CD4-positive, alpha-beta T cell (primary cell): ENCODE measurements at regions of chr11 and their contacts with region 1.

Region 1: GRCh38 chr11:65497141-65498041 is 1.5 kb upstream of the MALAT1 start:
- DNase-seq: peak; percentile 95 to 99 (median 98)
- ATAC-seq: peak; percentile 78
- H3K4me3 ChIP-seq: peak overlapping the region; percentile 73
- H3K4me3 Mint-ChIP-seq: no peak overlapping the region
- H3K27ac ChIP-seq: peak overlapping the region; percentile 96 to 99
- H3K27ac Mint-ChIP-seq: no peak overlapping the region
- H3K4me1 ChIP-seq: peaks cover 33% of the 10 kb centered on the region
- H3K4me1 Mint-ChIP-seq: peaks cover 28% of the 10 kb centered on the region
- H3K27me3 ChIP-seq: no peaks in the 10 kb centered on the region
- H3K27me3 Mint-ChIP-seq: no peaks in the 10 kb centered on the region
- CTCF ChIP-seq: no peak

Region 2: DNA sequence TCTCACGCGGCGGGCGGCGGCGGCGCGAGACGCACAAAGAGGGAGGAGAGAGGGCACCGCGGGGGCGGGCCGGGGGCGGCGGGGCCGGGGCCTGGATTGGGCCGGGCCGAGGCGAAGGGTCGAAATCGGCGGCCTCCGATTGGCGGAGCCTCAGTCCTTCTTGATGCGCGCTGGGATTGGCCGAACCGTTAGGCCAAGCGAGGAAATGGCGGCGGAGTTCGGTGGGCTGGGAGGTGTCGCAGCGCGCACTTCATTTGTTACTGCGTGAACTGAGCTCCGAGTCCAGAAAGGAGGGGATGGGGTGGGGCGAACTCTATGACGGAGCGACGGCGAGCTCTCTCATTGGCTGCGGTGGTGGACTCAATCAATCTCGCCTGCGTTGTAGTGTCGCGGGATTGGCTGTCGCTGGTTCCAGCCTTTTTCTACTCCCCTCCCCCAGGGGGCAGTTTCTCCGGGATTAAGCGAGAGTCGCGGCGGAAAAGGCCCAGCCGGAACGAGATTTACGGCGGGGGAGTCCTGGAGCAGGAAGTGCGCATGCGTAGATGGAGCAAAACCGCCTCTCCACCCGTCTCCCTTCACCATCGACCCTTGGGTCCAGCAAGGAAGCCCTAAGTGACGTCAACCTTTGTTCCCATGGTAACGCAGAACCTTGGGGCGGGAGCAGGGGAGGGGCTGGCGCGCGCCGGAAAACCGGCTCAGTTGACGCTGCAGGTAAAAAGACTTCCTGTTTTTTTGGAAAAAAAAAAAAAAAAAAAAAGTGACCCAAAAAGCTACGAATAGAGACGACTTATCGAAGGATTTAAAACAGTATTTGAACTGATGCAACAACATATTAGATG is 718.7 kb before region 1 on chr11 and contains the start of gene SF1:
- CTCF ChIA-PET with region 1: no interaction called
- POLR2A ChIA-PET with region 1: interaction called, 28 read pairs
- intact Hi-C with region 1: no loop called
- DNase-seq: peak; percentile 96 to 100 (median 98)
- ATAC-seq: peak; percentile 81
- H3K4me3 ChIP-seq: peak within 1 kb of the TSS; percentile 74
- H3K4me3 Mint-ChIP-seq: peak within 1 kb of the TSS; percentile 95
- H3K27ac ChIP-seq: peak within 1 kb of the TSS; percentile 94 to 98
- H3K27ac Mint-ChIP-seq: peak within 1 kb of the TSS; percentile 99
- H3K4me1 ChIP-seq: peaks cover 52% of the 10 kb centered on the region
- H3K4me1 Mint-ChIP-seq: peaks cover 70% of the 10 kb centered on the region
- H3K27me3 ChIP-seq: no peaks in the 10 kb centered on the region
- H3K27me3 Mint-ChIP-seq: no peaks in the 10 kb centered on the region
- CTCF ChIP-seq: peak; percentile 14
- total RNA-seq, gene SF1: 1,632 to 1,657 TPM

Region 3: GRCh38 chr11:65288706-65289536 is 208.5 kb before region 1 on chr11:
- CTCF ChIA-PET with region 1: no interaction called
- POLR2A ChIA-PET with region 1: no interaction called
- intact Hi-C with region 1: no loop called
- DNase-seq: no peak
- ATAC-seq: no peak
- H3K4me3 ChIP-seq: no peak overlapping the region
- H3K4me3 Mint-ChIP-seq: no peak overlapping the region
- H3K27ac ChIP-seq: no peak overlapping the region
- H3K27ac Mint-ChIP-seq: no peak overlapping the region
- H3K4me1 ChIP-seq: no peaks in the 10 kb centered on the region
- H3K4me1 Mint-ChIP-seq: no peaks in the 10 kb centered on the region
- H3K27me3 ChIP-seq: no peaks in the 10 kb centered on the region
- H3K27me3 Mint-ChIP-seq: no peaks in the 10 kb centered on the region
- CTCF ChIP-seq: no peak

Region 4: GRCh38 chr11:65314501-65315203 is 182.7 kb before region 1 on chr11 and contains the start of gene CDC42EP2:
- CTCF ChIA-PET with region 1: no interaction called
- POLR2A ChIA-PET with region 1: interaction called, 16 read pairs
- intact Hi-C with region 1: no loop called
- DNase-seq: peak; percentile 35 to 86 (median 72)
- ATAC-seq: peak; percentile 89
- H3K4me3 ChIP-seq: peak within 1 kb of the TSS; percentile 90
- H3K4me3 Mint-ChIP-seq: peak within 1 kb of the TSS; percentile 86
- H3K27ac ChIP-seq: no peak within 1 kb of the TSS
- H3K27ac Mint-ChIP-seq: no peak within 1 kb of the TSS
- H3K4me1 ChIP-seq: peaks cover 21% of the 10 kb centered on the region
- H3K4me1 Mint-ChIP-seq: peaks cover 12% of the 10 kb centered on the region
- H3K27me3 ChIP-seq: peaks cover 0 to 2% of the 10 kb centered on the region in 2 experiments
- H3K27me3 Mint-ChIP-seq: no peaks in the 10 kb centered on the region
- CTCF ChIP-seq: no peak
- total RNA-seq, gene CDC42EP2: 0.96 TPM in 1 of 2 experiments, not detected in the other

Region 5: DNA sequence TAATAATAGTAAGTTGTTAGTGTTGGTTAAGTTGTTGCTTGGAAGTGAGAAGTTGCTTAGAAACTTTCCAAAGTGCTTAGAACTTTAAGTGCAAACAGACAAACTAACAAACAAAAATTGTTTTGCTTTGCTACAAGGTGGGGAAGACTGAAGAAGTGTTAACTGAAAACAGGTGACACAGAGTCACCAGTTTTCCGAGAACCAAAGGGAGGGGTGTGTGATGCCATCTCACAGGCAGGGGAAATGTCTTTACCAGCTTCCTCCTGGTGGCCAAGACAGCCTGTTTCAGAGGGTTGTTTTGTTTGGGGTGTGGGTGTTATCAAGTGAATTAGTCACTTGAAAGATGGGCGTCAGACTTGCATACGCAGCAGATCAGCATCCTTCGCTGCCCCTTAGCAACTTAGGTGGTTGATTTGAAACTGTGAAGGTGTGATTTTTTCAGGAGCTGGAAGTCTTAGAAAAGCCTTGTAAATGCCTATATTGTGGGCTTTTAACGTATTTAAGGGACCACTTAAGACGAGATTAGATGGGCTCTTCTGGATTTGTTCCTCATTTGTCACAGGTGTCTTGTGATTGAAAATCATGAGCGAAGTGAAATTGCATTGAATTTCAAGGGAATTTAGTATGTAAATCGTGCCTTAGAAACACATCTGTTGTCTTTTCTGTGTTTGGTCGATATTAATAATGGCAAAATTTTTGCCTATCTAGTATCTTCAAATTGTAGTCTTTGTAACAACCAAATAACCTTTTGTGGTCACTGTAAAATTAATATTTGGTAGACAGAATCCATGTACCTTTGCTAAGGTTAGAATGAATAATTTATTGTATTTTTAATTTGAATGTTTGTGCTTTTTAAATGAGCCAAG is 72.1 kb before region 1 on chr11:
- CTCF ChIA-PET with region 1: interaction called, 8 read pairs
- POLR2A ChIA-PET with region 1: interaction called, 3,042 read pairs
- intact Hi-C with region 1: loop called (anchors 1 to 2 kb)
- DNase-seq: peak; percentile 69 to 97 (median 80)
- ATAC-seq: peak; percentile 56
- H3K4me3 ChIP-seq: peak overlapping the region; percentile 86
- H3K4me3 Mint-ChIP-seq: peak overlapping the region; percentile 92
- H3K27ac ChIP-seq: peak overlapping the region; percentile 99
- H3K27ac Mint-ChIP-seq: peak overlapping the region; percentile 96
- H3K4me1 ChIP-seq: peaks cover 58% of the 10 kb centered on the region
- H3K4me1 Mint-ChIP-seq: peaks cover 70% of the 10 kb centered on the region
- H3K27me3 ChIP-seq: no peaks in the 10 kb centered on the region
- H3K27me3 Mint-ChIP-seq: no peaks in the 10 kb centered on the region
- CTCF ChIP-seq: peak; percentile 31

Region 6: DNA sequence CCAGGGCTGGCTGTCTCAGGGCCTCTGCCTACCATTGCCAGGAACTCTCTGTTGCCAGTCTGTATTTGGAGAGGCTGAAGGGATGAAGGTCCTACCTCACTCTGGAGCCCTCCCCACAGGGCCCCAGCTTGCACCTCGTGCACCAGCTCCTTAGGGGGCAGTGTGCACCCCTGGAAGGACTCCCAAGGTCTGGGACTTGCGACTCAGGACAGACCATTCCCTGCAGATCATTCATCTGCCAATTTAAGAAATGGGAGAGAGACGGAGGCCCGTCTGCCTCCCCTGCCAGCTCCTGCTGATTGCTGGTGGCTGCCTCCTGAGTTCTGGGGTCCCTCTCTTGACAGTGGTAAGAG is 26.0 kb before region 1 on chr11:
- CTCF ChIA-PET with region 1: interaction called, 24 read pairs
- POLR2A ChIA-PET with region 1: interaction called, 968 read pairs
- intact Hi-C with region 1: loop called in 1 of 2 experiments (anchors 1 kb)
- DNase-seq: peak in 5 of 14 experiments; percentile 15 to 64 (median 32)
- ATAC-seq: no peak
- H3K4me3 ChIP-seq: peak overlapping the region; percentile 3
- H3K4me3 Mint-ChIP-seq: no peak overlapping the region
- H3K27ac ChIP-seq: peak overlapping the region; percentile 72 to 76
- H3K27ac Mint-ChIP-seq: peak overlapping the region; percentile 92
- H3K4me1 ChIP-seq: peaks cover 26% of the 10 kb centered on the region
- H3K4me1 Mint-ChIP-seq: peaks cover 16% of the 10 kb centered on the region
- H3K27me3 ChIP-seq: no peaks in the 10 kb centered on the region
- H3K27me3 Mint-ChIP-seq: no peaks in the 10 kb centered on the region
- CTCF ChIP-seq: no peak

Region 7: GRCh38 chr11:65558002-65558931 is 60.9 kb after region 1 on chr11 and contains the start of gene LTBP3:
- CTCF ChIA-PET with region 1: no interaction called
- POLR2A ChIA-PET with region 1: interaction called, 14 read pairs
- intact Hi-C with region 1: no loop called
- DNase-seq: peak in 7 of 14 experiments; percentile 36 to 73 (median 65)
- ATAC-seq: peak; percentile 39
- H3K4me3 ChIP-seq: peak within 1 kb of the TSS; percentile 63
- H3K4me3 Mint-ChIP-seq: peak within 1 kb of the TSS; percentile 94
- H3K27ac ChIP-seq: peak within 1 kb of the TSS; percentile 80
- H3K27ac Mint-ChIP-seq: peak within 1 kb of the TSS; percentile 87
- H3K4me1 ChIP-seq: peaks cover 80% of the 10 kb centered on the region
- H3K4me1 Mint-ChIP-seq: peaks cover 59% of the 10 kb centered on the region
- H3K27me3 ChIP-seq: no peaks in the 10 kb centered on the region
- H3K27me3 Mint-ChIP-seq: no peaks in the 10 kb centered on the region
- CTCF ChIP-seq: no peak
- total RNA-seq, gene LTBP3: 236 to 238 TPM

Region 8: GRCh38 chr11:65711785-65712632 is 214.6 kb after region 1 on chr11 and contains the start of gene KAT5:
- CTCF ChIA-PET with region 1: no interaction called
- POLR2A ChIA-PET with region 1: interaction called, 13 read pairs
- intact Hi-C with region 1: no loop called
- DNase-seq: peak; percentile 95 to 99 (median 96)
- ATAC-seq: peak; percentile 79
- H3K4me3 ChIP-seq: peak within 1 kb of the TSS; percentile 82
- H3K4me3 Mint-ChIP-seq: peak within 1 kb of the TSS; percentile 98
- H3K27ac ChIP-seq: peak within 1 kb of the TSS; percentile 99
- H3K27ac Mint-ChIP-seq: peak within 1 kb of the TSS; percentile 99
- H3K4me1 ChIP-seq: peaks cover 30% of the 10 kb centered on the region
- H3K4me1 Mint-ChIP-seq: peaks cover 23% of the 10 kb centered on the region
- H3K27me3 ChIP-seq: no peaks in the 10 kb centered on the region
- H3K27me3 Mint-ChIP-seq: no peaks in the 10 kb centered on the region
- CTCF ChIP-seq: peak; percentile 98
- total RNA-seq, gene KAT5: 90.9 to 99.6 TPM

Region 9: GRCh38 chr11:65851812-65852507 is 354.6 kb after region 1 on chr11:
- CTCF ChIA-PET with region 1: no interaction called
- POLR2A ChIA-PET with region 1: no interaction called
- intact Hi-C with region 1: no loop called
- DNase-seq: peak in 1 of 14 experiments; percentile 26
- ATAC-seq: no peak
- H3K4me3 ChIP-seq: no peak overlapping the region
- H3K4me3 Mint-ChIP-seq: no peak overlapping the region
- H3K27ac ChIP-seq: no peak overlapping the region
- H3K27ac Mint-ChIP-seq: no peak overlapping the region
- H3K4me1 ChIP-seq: peaks cover 40% of the 10 kb centered on the region
- H3K4me1 Mint-ChIP-seq: peaks cover 26% of the 10 kb centered on the region
- H3K27me3 ChIP-seq: no peaks in the 10 kb centered on the region
- H3K27me3 Mint-ChIP-seq: no peaks in the 10 kb centered on the region
- CTCF ChIP-seq: no peak

Region 10: DNA sequence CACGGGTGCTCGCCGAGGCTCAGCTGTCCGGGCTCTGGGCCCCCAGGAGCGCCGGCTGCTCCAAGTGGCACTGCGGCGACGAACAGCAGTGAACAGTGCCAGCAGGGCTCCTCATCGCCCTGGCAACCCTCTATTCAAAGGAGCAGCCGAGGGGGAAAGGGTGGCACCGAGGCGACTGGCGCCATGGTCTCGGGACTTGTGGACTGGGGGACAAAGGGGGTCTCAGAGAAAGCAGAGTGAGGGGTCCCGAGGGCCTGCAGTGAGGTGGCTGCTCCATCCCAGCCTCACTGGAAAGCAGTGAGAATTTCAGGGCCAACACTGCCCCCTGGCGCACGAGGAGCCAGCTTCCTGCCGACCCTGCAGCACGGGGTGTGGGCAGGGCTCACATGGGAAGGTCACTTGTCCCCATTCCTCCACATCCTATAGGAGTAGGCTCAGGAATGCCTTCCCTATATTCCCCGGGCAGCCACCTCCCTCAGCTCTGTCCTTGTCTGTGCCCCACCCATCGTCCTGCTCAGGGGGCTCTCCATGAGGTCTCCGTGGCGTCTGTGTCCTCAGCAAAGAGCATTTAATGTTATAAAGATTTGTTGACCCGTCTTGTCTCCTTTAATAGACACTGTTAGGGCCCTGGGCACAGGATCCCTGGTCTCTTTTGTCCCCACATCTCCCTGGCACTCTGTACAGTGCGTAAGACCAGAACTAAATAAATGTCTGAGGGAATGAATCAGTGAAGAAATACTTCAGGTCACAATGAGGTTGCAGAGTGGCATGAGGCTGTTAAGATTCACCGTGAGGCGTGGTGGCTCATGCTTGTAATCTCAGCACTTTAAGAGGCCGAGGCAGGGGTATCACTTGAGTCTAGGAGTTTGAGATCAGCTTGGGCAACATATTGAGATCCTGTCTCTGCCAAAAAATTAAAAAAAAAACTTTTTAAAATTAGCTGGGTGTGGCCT is 1385.9 kb after region 1 on chr11:
- CTCF ChIA-PET with region 1: no interaction called
- POLR2A ChIA-PET with region 1: no interaction called
- intact Hi-C with region 1: no loop called
- DNase-seq: peak in 13 of 14 experiments; percentile 38 to 71 (median 54)
- ATAC-seq: peak; percentile 54
- H3K4me3 ChIP-seq: no peak overlapping the region
- H3K4me3 Mint-ChIP-seq: no peak overlapping the region
- H3K27ac ChIP-seq: no peak overlapping the region
- H3K27ac Mint-ChIP-seq: no peak overlapping the region
- H3K4me1 ChIP-seq: peaks cover 13% of the 10 kb centered on the region
- H3K4me1 Mint-ChIP-seq: peaks cover 14% of the 10 kb centered on the region
- H3K27me3 ChIP-seq: no peaks in the 10 kb centered on the region
- H3K27me3 Mint-ChIP-seq: no peaks in the 10 kb centered on the region
- CTCF ChIP-seq: peak; percentile 65